ENCODE measurements at regions of chr1 and their contacts with region 1.

Region 1: DNA sequence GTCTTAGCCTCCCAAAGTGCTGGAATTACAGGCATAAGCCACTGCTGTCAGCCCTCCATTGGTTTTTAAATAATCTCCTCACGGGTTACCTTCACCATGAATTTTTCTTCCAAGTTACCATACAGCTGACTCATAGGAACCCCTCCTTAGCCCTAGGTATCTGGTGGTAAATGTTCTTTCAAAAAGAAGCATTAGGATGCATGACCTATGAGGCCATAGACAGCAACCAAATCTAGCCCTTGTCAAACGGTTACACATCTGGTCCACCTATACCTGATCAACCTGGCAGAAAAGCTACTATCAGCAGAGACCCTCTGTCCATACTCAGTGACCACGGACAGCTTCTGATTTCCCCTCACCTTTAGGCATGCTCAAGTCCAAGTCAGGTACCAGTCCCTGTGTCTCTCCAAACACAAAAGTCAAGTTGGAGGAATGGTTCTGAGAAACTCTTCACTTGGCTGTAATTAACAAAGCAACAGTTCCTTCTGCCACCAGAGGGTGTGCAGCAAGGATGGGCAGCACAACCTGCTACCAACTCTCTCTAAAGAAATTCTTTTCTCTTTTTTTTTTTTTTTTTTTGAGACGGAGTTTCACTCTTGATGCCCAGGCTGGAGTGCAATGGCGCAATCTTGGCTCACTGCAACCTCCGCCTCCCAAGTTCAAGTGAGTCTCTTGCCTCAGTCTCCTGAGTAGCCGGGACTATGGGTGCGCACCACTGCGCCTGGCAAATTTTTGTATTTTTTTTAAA is 12.5 kb upstream of the DEGS1 start:
- DNase-seq: no peak
- H3K4me3 ChIP-seq: no peak overlapping the region
- H3K27ac ChIP-seq: no peak overlapping the region
- H3K4me1 ChIP-seq: peaks cover 4% of the 10 kb centered on the region
- H3K27me3 ChIP-seq: no peaks in the 10 kb centered on the region
- CTCF ChIP-seq: no peak

Region 2: DNA sequence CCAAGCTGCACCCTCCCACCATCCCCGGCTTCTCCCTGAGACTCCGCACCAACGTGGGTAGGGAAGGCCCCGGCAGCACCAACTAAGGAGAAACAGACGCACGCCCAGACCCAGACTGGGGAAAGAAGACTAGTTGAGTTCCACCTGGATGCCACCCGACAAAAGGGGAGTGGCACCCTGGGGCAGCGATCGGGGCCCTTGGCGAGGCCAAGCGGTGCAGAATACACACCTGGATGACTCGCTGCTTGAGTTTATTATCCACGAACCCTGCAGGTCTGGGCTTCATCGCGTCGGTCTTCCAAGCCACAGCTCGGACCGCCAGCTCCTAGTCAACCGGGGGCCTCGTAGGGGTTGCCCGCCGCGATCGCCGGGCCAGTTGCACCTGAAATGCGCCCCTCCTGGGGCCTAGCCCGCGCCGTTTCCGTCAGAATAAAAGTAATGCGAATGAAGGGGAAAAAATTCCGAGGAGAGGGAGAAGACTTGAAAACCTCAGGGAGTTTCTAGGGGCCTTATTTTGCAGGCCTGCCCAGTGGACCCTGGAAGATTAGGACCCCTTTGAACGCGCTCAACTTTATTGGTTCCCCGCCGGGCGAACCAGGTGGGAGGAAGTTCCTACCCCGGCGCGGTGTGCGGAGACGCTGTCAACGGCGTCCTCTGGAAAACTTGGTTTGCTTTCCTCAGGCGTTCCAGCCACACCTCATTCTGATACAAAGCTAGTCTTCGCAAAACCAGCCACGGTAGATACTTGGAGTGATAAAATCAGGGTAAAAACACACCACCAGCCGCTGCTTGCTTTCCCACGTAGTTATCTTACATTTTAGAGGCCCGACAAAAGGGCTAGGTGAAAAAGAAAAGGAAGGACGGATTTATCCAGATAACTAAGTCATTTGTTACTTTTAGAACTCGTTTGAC is 159.6 kb after region 1 on chr1 and contains the start of gene NVL:
- intact Hi-C with region 1: loop called (anchors 10 kb)
- DNase-seq: peak; percentile 89
- H3K4me3 ChIP-seq: peak within 1 kb of the TSS; percentile 90
- H3K27ac ChIP-seq: peak within 1 kb of the TSS; percentile 93
- H3K4me1 ChIP-seq: peaks cover 10% of the 10 kb centered on the region
- H3K27me3 ChIP-seq: no peaks in the 10 kb centered on the region
- CTCF ChIP-seq: no peak
- total RNA-seq, gene NVL: 39.4 to 51.5 TPM

Measured in colonic mucosa (tissue), 4 donors.